T-cell (primary cell): ENCODE measurements at regions of chr10 and their contacts with region 1.

Region 1: DNA sequence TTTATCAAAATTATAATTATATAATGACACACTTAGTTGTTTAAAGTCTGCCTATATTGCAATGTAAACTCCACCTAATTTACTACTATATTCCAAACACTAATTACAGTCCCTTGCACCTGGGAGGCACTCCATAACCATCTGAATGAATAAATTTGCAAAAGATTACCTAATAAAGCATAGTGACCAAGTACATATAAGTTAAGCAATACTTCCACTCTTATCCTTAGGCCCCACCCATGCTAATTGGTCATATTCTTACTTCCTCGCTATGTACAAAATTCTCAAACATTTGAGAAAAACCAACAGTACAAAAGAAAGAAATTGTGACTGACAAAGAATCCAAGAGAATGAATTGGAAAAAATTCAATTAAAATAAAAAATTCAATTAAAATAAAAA is 65.3 kb downstream of the ZFAND4 start:
- DNase-seq: no peak
- ATAC-seq: no peak
- H3K4me3 ChIP-seq: no peak overlapping the region
- H3K4me3 Mint-ChIP-seq: no peak overlapping the region
- H3K27ac ChIP-seq: no peak overlapping the region
- H3K27ac Mint-ChIP-seq: no peak overlapping the region
- H3K4me1 ChIP-seq: no peaks in the 10 kb centered on the region
- H3K4me1 Mint-ChIP-seq: no peaks in the 10 kb centered on the region
- H3K27me3 ChIP-seq: no peaks in the 10 kb centered on the region
- H3K27me3 Mint-ChIP-seq: no peaks in the 10 kb centered on the region

Region 2: DNA sequence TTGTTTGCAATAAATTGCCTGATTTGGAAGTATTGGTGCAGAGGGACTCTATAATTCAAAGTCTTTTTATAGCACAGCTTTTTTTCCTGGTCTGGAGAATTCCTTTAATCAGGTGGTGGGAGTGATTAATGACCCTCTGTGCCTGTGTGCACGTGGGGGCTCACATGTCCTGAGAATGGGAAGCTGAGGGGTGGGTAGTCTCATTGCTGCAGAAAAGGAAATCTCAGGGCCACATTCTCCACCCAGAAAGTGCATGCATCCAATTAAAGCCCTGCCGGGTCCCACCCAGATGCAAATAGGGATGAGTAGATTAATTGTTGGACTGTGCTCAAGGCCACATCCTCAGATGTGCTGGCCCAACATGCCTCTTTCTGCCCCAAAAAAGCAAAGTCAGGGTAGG is 1547.1 kb before region 1 on chr10:
- CTCF ChIA-PET with region 1: no interaction called
- POLR2A ChIA-PET with region 1: interaction called in 1 of 2 experiments, 19 read pairs
- DNase-seq: no peak
- ATAC-seq: no peak
- H3K4me3 ChIP-seq: no peak overlapping the region
- H3K4me3 Mint-ChIP-seq: no peak overlapping the region
- H3K27ac ChIP-seq: no peak overlapping the region
- H3K27ac Mint-ChIP-seq: no peak overlapping the region
- H3K4me1 ChIP-seq: no peaks in the 10 kb centered on the region
- H3K4me1 Mint-ChIP-seq: no peaks in the 10 kb centered on the region
- H3K27me3 ChIP-seq: peaks cover 0 to 26% of the 10 kb centered on the region in 2 experiments
- H3K27me3 Mint-ChIP-seq: peaks cover 8 to 13% of the 10 kb centered on the region in 2 donors

Region 3: GRCh38 chr10:46171661-46172060 is 564.4 kb after region 1 on chr10:
- CTCF ChIA-PET with region 1: no interaction called
- POLR2A ChIA-PET with region 1: no interaction called
- DNase-seq: no peak
- ATAC-seq: no peak
- H3K4me3 ChIP-seq: no peak overlapping the region
- H3K4me3 Mint-ChIP-seq: no peak overlapping the region
- H3K27ac ChIP-seq: no peak overlapping the region
- H3K27ac Mint-ChIP-seq: no peak overlapping the region
- H3K4me1 ChIP-seq: no peaks in the 10 kb centered on the region
- H3K4me1 Mint-ChIP-seq: no peaks in the 10 kb centered on the region
- H3K27me3 ChIP-seq: no peaks in the 10 kb centered on the region
- H3K27me3 Mint-ChIP-seq: no peaks in the 10 kb centered on the region